Left ventricle myocardium superior (tissue), 1 donor: ENCODE measurements at regions of chr21 and their contacts with region 1.

Region 1: GRCh38 chr21:37435120-37435519 is 68.5 kb downstream of the DYRK1A start:
- DNase-seq: peak; percentile 43
- ATAC-seq: peak; percentile 94

Region 2: DNA sequence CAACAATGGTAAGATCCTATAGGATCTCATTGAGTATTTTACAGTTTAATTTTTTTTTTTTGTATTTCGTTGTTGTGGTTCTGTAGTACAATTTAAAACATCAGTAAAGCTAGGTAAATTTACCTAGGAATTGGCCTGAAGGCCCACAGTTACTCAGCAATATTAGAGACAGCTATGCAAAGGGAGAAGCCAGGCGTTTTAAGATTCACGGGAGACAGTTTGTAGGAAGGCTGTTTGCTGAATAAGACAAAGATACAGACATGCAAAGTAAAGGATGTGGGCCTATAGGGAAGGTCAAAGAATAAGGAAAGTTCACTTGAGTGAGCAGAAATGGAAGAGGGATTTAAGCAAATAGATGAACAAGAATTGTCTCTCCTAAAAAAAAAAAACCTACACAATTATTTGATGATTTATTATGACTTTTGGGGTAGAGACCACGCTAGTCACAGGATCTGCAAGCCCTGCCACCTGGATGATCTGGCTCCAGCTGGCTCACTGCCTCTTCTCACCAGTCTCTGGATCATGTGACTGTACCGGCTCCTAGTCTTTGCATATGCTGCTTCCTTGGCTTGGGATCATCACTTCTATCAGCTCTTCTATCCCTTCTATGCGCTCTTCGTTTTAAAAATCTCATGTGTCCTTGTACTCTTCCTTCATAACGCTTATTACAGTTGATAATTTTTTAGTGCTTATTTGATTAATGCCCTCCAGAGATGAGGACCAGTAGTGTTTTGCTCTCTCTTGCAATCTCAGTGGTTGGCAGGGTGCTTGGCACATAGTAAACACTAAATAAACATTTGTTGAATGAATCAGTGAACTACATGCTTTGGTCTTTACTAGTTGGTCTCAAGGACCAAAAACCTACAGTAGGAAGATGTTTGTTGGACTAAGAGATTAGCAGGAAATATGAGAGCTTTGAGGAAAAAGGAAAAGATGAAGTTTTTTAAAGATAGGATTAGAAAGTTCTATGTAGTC is 54.5 kb before region 1 on chr21:
- intact Hi-C with region 1: loop called (anchors 10 kb)
- DNase-seq: peak; percentile 39
- ATAC-seq: peak; percentile 52

Region 3: GRCh38 chr21:37532868-37533780 is 98.0 kb after region 1 on chr21:
- intact Hi-C with region 1: no loop called
- DNase-seq: no peak
- ATAC-seq: peak; percentile 12

Region 4: GRCh38 chr21:37631319-37632117 is 196.4 kb after region 1 on chr21:
- intact Hi-C with region 1: no loop called
- DNase-seq: no peak
- ATAC-seq: peak; percentile 31